PC-3 (cell line): ENCODE measurements at regions of chr4 and their contacts with region 1.

Region 1: DNA sequence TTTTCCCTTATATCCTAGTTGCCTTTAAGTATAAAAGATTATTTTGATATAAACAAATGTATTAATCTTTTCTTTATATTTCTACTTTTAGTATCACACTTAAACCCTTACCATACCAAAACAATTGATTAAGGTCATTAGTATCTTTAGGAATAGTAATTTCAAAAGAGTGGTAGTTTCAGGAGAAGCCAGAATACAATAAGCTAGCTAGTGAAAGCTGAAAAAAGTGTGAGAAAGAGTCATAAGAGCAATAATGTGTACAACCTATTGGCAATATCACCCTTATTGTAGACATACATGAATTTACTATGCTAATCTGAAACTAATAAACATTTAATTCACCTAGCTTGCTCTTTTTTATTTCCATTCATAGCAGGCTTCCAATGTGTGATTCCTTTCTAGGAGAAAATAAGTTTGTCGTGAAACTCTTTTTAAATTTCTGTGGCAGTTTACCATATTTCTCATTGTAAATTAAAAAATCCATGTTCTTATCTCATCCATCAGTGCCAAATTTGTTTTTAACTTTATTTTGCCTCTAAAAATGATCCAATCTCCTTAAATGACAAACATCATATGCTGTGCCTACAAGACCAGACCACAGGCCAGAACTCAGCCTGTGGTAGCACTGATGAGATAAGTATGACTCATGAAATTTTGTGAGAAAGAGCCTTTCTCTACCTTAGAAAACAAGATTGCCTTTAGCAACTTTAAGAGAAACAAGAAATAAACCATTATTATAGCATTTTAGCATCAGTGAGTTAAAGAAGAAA is 8.1 kb downstream of the NEK1 start:
- DNase-seq: peak; percentile 67
- ATAC-seq: peak; percentile 94
- H3K4me3 ChIP-seq: no peak overlapping the region
- H3K27ac ChIP-seq: peak overlapping the region; percentile 14; the same call in 1 of the 2 replicates
- H3K4me1 ChIP-seq: peaks cover 14% of the 10 kb centered on the region
- H3K27me3 ChIP-seq: no peaks in the 10 kb centered on the region
- CTCF ChIP-seq: no peak

Region 2: GRCh38 chr4:168784786-168785461 is 819.4 kb before region 1 on chr4:
- CTCF ChIA-PET with region 1: no interaction called
- POLR2A ChIA-PET with region 1: interaction called, 17 read pairs
- intact Hi-C with region 1: no loop called
- DNase-seq: peak; percentile 10
- ATAC-seq: no peak
- H3K4me3 ChIP-seq: no peak overlapping the region
- H3K27ac ChIP-seq: no peak overlapping the region
- H3K4me1 ChIP-seq: no peaks in the 10 kb centered on the region
- H3K27me3 ChIP-seq: no peaks in the 10 kb centered on the region
- CTCF ChIP-seq: no peak

Region 3: DNA sequence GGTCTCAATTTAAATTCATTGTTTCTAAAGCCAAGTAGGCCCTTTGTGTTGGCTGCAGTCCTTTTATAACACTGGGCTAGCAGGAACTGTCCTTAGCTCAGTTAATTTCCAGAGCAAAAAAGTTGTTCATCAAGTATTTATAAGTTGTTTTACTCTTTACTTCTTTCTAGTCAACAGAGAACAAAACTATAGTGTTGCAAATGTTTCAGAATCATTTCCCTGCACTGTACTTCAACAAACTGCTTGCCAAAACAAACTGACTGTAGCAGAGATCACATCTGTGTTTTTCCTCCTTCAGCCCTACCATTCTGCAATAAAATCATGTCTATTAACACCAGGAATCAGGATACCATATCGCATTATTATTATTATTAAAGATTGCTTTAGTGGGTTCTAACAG is 165.1 kb before region 1 on chr4:
- CTCF ChIA-PET with region 1: no interaction called
- POLR2A ChIA-PET with region 1: no interaction called
- intact Hi-C with region 1: no loop called
- DNase-seq: no peak
- ATAC-seq: no peak
- H3K4me3 ChIP-seq: no peak overlapping the region
- H3K27ac ChIP-seq: no peak overlapping the region
- H3K4me1 ChIP-seq: no peaks in the 10 kb centered on the region
- H3K27me3 ChIP-seq: no peaks in the 10 kb centered on the region
- CTCF ChIP-seq: no peak